ENCODE measurements at regions of chr7 and their contacts with region 1.

Region 1: DNA sequence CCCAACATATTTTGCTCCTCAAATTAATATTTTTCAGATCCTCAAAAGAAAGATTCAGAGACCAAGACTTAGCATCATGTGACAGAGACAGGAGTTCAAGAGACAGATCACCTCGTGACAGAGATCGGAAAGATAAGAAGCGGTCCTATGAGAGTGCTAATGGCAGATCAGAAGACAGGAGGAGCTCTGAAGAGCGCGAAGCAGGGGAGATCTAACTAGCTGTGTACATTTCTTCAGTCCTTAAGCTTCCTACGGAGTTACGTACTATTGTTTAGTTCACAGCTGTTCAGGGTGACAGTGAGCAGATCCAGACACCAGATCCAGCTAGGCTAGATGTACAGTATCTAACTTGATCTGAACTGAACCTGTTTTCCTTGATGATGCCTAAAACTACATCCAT is 61.3 kb downstream of the KLRG2 start:
- DNase-seq: no peak
- H3K4me3 Mint-ChIP-seq: no peak overlapping the region
- H3K27ac Mint-ChIP-seq: no peak overlapping the region
- H3K4me1 Mint-ChIP-seq: no peaks in the 10 kb centered on the region
- H3K27me3 Mint-ChIP-seq: no peaks in the 10 kb centered on the region
- CTCF ChIP-seq: no peak

Region 2: DNA sequence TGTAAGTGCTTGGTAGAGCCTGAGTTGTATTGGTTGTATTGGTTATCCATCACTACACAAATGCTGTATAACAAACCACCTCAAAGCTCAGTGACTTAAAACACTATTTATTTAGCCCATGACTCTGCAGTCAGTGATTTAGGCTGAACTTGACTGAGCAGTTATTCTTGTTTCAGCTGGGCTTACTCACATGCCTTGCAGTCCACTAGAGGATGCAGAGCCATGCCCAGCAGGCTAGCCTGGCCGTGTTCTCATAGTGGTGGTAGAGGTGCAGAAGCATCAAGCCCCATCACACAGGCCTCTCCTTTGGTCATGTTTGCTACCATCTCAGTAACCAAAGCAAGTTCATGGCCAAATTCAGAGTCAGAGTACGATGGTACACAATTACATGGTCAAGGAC is 18.5 kb before region 1 on chr7:
- CTCF ChIA-PET with region 1: interaction called, 10 read pairs
- intact Hi-C with region 1: no loop called
- DNase-seq: no peak
- H3K4me3 Mint-ChIP-seq: no peak overlapping the region
- H3K27ac Mint-ChIP-seq: no peak overlapping the region
- H3K4me1 Mint-ChIP-seq: no peaks in the 10 kb centered on the region
- H3K27me3 Mint-ChIP-seq: no peaks in the 10 kb centered on the region
- CTCF ChIP-seq: no peak

Region 3: DNA sequence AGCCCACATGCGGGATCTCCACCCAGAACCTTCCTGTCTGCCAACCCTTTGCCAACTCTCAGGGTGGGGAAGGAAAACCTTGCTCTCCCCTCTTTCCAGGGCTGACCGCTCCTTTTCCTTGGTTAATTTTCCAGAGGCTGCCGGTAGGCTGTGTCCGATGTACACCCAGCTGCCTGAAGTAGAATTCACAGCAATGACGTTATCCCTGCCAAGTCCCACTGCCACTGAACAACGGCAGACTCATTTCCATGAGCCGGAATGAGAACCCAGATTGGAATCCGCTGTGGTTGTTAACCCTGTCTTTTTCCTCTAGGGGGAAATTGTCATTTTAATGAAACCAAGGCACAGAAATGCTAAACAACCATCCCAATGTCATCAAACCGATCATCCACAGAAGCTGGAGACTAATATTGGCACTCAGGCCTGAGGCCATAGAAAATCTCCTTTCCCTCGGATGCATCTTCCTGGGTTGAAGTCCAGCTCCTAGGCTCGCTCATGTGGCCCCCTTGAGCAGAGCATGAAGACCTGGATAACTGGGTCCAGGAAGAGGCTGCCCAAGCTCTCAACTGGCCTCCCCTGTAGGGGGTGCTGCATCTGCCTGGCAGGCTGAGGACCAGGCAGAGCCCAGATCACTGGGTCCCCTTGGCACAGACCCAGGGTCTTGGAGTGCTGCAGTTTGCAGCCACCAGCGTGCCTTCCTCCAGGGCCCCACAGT is 31.0 kb after region 1 on chr7:
- CTCF ChIA-PET with region 1: no interaction called
- intact Hi-C with region 1: no loop called
- DNase-seq: no peak
- H3K4me3 Mint-ChIP-seq: no peak overlapping the region
- H3K27ac Mint-ChIP-seq: no peak overlapping the region
- H3K4me1 Mint-ChIP-seq: no peaks in the 10 kb centered on the region
- H3K27me3 Mint-ChIP-seq: no peaks in the 10 kb centered on the region
- CTCF ChIP-seq: no peak